ENCODE measurements at regions of chr1 and their contacts with region 1.

Region 1: DNA sequence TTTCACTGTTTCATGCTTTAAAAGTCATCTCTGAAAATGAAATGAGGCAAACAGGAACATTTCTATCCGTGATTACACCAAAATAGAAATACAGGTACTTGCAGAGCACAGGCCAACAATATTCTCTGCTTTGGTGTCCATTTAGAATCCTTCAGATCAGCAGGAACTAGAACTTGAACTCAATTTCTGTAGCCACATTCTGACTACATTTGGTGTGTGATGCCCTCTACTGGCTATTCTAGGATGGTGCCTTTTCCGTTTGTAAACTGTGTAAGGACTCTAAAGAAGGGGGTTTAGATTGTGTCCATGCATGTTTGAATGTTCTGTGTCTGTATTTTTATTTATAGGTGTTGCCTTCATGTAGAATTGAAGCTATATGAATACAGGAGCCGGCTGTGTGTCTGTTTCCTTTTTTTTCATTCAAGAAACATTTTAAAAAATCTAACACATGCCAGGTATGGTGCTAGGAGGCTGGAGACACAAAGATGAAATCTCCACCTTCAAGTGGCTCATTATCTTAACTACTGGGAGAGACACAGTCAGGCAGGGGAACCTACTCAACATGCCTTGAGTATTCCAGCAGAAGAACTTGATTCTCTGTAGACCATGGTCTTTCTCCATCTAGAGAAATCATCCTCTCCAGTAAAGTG is 7.6 kb upstream of the ZNF326 start:
- DNase-seq: peak in 2 of 5 donors; percentile 36 to 49
- ATAC-seq: peak; percentile 65 to 90 (median 88)
- H3K4me3 ChIP-seq: no peak overlapping the region
- H3K27ac ChIP-seq: no peak overlapping the region
- H3K4me1 ChIP-seq: peaks cover 0 to 7% (median 0%) of the 10 kb centered on the region in 12 donors
- H3K27me3 ChIP-seq: no peaks in the 10 kb centered on the region
- CTCF ChIP-seq: peak; percentile 77 to 93 (median 87)
- POLR2A ChIP-seq: no peak

Region 2: GRCh38 chr1:89483010-89483756 is 504.1 kb before region 1 on chr1:
- intact Hi-C with region 1: loop called in 4 of 10 experiments (anchors 10 kb)
- DNase-seq: peak; percentile 64 to 82 (median 76)
- ATAC-seq: peak in 3 of 4 donors; percentile 71 to 85 (median 80)
- H3K4me3 ChIP-seq: no peak overlapping the region
- H3K27ac ChIP-seq: no peak overlapping the region
- H3K4me1 ChIP-seq: no peaks in the 10 kb centered on the region
- H3K27me3 ChIP-seq: no peaks in the 10 kb centered on the region
- CTCF ChIP-seq: peak; percentile 71 to 90 (median 80)
- POLR2A ChIP-seq: no peak

Region 3: GRCh38 chr1:89804642-89805237 is 182.6 kb before region 1 on chr1:
- intact Hi-C with region 1: loop called (anchors 1 to 2 kb)
- DNase-seq: peak; percentile 77 to 88 (median 84)
- ATAC-seq: peak; percentile 82 to 94 (median 92)
- H3K4me3 ChIP-seq: no peak overlapping the region
- H3K27ac ChIP-seq: no peak overlapping the region
- H3K4me1 ChIP-seq: peaks cover 0 to 8% (median 0%) of the 10 kb centered on the region in 12 donors
- H3K27me3 ChIP-seq: no peaks in the 10 kb centered on the region
- CTCF ChIP-seq: peak; percentile 89 to 97 (median 92)
- POLR2A ChIP-seq: no peak

Region 4: DNA sequence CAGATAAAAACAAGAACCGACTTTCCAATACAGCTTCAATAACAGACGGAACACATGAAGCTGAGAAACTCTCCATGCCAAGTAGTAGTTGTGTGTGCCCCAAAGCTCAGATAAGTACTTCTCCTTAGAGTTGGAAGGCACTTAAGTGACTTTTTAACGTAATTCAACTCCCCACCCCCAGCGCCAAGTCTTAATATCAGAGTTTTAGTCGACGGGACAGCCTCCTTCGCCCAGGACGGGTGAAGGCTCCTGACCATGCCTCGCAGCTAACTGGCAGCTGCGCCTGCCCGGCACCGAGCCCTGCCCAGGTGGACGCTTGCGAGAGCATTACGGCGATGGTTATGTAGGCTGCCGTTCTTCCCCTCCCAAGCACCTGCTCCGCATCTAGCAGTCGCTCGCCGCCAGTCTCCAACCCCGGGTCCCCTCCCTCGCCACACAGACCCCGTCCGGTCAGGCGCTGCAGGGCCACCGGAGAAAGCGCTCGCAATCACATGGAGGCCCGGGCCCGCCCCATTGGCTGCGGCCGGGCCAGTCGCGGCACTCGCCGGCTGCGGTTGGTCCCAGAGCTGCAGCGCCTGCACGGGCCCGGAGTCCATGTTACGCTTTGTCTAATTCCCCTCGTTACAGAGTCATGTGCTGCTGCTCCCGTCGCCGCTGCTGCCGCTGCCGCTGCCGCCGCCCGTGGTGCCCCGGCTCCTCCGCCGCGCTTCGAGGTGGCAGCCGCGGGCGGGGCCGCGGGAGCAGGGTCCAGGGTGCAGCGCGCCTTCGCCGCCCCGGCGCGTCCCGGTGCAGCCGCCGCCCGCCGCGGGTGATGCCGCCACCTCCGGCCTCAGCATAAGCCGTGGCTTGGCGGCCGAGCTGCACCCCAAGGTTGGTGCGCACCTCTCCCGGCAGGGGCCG is 166.6 kb before region 1 on chr1 and contains the start of gene LRRC8D:
- intact Hi-C with region 1: loop called in 3 of 10 experiments (anchors 5 kb)
- DNase-seq: peak; percentile 86 to 93 (median 88)
- ATAC-seq: peak; percentile 95 to 98 (median 98)
- H3K4me3 ChIP-seq: peak within 1 kb of the TSS; percentile 69 to 99 (median 92)
- H3K27ac ChIP-seq: peak within 1 kb of the TSS; percentile 10 to 91 (median 78)
- H3K4me1 ChIP-seq: peaks cover 0 to 54% (median 17%) of the 10 kb centered on the region in 12 donors
- H3K27me3 ChIP-seq: no peaks in the 10 kb centered on the region
- CTCF ChIP-seq: peak in 2 of 12 donors; percentile 11 to 12
- POLR2A ChIP-seq: peak; percentile 8 to 74
- total RNA-seq, gene LRRC8D: 5.7 to 13.0 (median 8.0) TPM

Region 5: DNA sequence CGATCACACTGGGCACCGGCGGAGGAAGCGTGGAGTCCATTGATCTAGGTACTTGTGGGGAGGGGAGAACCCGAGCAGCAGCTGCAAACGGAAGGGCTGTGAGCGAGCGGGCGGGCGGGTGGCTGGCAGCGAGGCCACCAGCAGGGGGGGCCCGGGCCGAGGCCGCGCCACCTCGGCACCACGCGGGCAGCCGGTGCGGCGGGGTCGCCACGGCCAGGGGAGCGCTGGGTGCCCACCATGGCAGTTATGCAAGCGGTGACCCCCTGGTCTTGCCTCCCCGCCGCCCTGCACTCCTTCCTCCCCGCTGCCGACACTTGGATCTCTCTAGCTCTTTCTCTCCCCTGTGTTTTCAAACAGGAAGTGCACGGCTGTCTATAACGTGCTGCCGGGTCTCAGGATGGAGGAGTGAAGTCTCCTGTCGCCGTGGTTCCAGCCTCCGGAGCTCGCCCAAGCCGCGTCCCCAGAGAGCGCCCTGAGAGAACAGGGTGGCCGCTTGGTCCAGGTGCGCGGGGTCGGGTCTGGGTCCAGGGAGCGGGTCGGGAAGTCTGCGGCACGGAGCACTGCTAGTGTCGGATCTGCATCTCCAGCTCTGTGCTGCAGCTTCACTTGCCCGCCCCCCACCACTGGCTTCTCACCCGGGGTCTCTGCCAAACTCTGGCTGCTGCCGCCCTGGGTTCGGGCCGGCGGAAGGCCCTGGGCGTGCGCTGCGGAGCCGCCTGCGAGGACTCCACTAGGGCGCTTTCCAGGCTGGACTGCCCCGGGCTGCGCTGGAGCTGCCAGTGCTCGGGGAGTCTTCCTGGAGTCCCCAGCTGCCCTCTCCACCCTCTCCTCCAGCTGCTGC is 143.8 kb before region 1 on chr1:
- intact Hi-C with region 1: loop called in 8 of 10 experiments (anchors 1 to 10 kb)
- DNase-seq: peak; percentile 68 to 88 (median 73)
- ATAC-seq: peak; percentile 85 to 97 (median 94)
- H3K4me3 ChIP-seq: peak overlapping the region; percentile 62 to 89 (median 74)
- H3K27ac ChIP-seq: peak overlapping the region in 11 of 12 donors; percentile 54 to 88 (median 73)
- H3K4me1 ChIP-seq: peaks cover 0 to 40% (median 12%) of the 10 kb centered on the region in 12 donors
- H3K27me3 ChIP-seq: no peaks in the 10 kb centered on the region
- CTCF ChIP-seq: peak; percentile 39 to 84 (median 74)
- POLR2A ChIP-seq: no peak

Region 6: DNA sequence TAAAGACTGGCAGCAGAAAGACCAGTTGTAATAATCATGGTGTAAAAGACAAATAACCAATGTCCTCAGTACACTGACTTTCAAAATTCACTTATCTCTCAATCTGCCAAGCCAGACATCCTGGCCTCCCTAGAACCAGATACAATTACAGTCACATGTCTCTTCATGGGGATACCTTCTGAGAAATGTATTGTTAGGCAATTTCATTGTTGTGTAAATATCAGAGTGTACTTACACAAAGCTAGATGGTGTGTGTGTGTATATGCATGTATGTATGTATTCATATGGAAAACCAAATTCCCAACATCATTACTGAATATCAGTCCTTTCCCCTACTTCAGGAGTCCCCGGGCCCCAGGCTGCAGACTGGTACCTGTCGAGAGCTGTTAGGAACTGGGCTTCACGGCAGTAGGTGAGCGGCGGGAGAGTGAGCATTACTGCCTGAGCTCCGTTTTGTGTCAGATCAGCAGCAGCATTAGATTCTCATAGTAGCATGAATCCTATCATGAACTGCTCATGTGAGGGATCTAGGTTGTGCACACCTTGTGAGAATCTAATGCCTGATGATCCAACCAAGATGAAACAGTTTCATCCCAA is 57.7 kb before region 1 on chr1:
- intact Hi-C with region 1: loop called in 1 of 10 experiments (anchors 10 kb)
- DNase-seq: no peak
- ATAC-seq: no peak
- H3K4me3 ChIP-seq: no peak overlapping the region
- H3K27ac ChIP-seq: no peak overlapping the region
- H3K4me1 ChIP-seq: peaks cover 0 to 8% (median 0%) of the 10 kb centered on the region in 12 donors
- H3K27me3 ChIP-seq: no peaks in the 10 kb centered on the region
- CTCF ChIP-seq: no peak
- POLR2A ChIP-seq: no peak